ENCODE measurements at regions of chr15 and their contacts with region 1.

Region 1: GRCh38 chr15:37783290-37783689 is 151.2 kb upstream of the TMCO5A start:
- DNase-seq: no peak
- ATAC-seq: peak in 1 of 8 donors; percentile 48
- H3K4me3 ChIP-seq: no peak overlapping the region
- H3K27ac ChIP-seq: no peak overlapping the region
- H3K4me1 ChIP-seq: no peaks in the 10 kb centered on the region
- H3K27me3 ChIP-seq: no peaks in the 10 kb centered on the region
- CTCF ChIP-seq: no peak

Region 2: DNA sequence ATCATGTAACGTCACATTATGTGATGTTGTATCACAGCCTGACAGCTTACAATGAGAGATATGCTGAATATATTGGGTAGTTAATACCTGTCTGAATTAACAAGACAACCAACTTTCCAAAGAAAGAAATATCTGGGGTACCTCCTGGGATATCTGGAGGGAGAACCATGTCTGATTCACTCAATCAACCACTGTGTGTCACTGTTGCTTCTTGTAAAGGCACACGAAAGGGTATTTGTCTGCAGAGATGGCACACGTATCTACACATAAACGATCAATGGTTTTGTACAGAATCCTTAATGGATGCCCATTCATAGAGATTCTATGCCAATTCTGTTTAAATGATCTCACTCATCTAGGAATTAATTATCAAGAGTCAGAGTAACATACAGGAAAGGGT is 101.0 kb before region 1 on chr15:
- intact Hi-C with region 1: no loop called
- DNase-seq: no peak
- ATAC-seq: no peak
- H3K4me3 ChIP-seq: no peak overlapping the region
- H3K27ac ChIP-seq: no peak overlapping the region
- H3K4me1 ChIP-seq: no peaks in the 10 kb centered on the region
- H3K27me3 ChIP-seq: no peaks in the 10 kb centered on the region
- CTCF ChIP-seq: no peak

Region 3: DNA sequence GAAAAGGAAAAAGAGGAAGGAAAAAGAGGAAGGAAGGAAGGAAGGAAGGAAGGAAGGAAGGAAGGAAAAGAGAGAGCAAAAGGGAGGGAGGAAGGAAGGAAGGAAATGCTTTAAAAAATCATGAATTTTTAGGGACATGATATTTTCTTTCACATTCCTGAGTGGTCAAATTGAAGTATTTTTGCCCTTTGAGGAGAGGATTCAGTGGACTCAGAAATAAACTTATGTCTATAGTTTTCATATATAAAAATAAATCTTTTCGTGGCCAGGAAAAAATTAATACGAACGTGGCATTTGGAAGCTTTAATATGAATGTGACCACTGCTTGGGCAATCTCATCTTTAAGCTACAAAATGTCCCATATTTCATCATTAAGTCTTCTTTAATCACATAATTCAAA is 31.9 kb before region 1 on chr15:
- intact Hi-C with region 1: no loop called
- DNase-seq: no peak
- ATAC-seq: no peak
- H3K4me3 ChIP-seq: no peak overlapping the region
- H3K27ac ChIP-seq: no peak overlapping the region
- H3K4me1 ChIP-seq: no peaks in the 10 kb centered on the region
- H3K27me3 ChIP-seq: no peaks in the 10 kb centered on the region
- CTCF ChIP-seq: no peak

Region 4: GRCh38 chr15:37973856-37974255 is 190.6 kb after region 1 on chr15:
- intact Hi-C with region 1: no loop called
- DNase-seq: no peak
- ATAC-seq: no peak
- H3K4me3 ChIP-seq: no peak overlapping the region
- H3K27ac ChIP-seq: no peak overlapping the region
- H3K4me1 ChIP-seq: no peaks in the 10 kb centered on the region
- H3K27me3 ChIP-seq: peaks cover 0 to 9% (median 0%) of the 10 kb centered on the region in 7 donors
- CTCF ChIP-seq: no peak

Region 5: DNA sequence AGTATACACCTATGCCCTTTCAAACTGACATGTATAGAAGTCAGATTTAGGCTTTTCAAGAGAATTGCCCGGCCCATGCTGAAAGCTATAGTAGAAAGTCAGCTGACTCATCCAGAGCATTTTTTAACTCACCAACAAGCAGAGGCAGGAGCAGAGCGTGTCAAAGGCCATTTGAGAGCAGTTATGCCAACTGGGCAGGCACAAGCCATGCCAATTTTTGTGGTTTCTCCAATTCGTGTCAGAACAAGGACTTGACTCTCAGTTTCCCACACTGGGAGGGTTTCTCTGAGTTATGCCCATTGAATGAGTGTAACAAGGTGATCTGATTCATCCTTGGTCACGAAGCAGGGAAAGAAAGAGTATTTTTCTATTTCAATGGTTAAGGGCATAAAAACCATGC is 1394.3 kb after region 1 on chr15:
- intact Hi-C with region 1: loop called in 1 of 10 experiments (anchors 5 kb)
- DNase-seq: no peak
- ATAC-seq: no peak
- H3K4me3 ChIP-seq: no peak overlapping the region
- H3K27ac ChIP-seq: no peak overlapping the region
- H3K4me1 ChIP-seq: peaks cover 0 to 24% (median 5%) of the 10 kb centered on the region in 9 donors
- H3K27me3 ChIP-seq: no peaks in the 10 kb centered on the region
- CTCF ChIP-seq: no peak